Calu3 (cell line): ENCODE measurements at regions of chr7 and their contacts with region 1.

Region 1: GRCh38 chr7:876167-876967 is at the start of gene GET4:
- DNase-seq: peak; percentile 100
- H3K4me3 Mint-ChIP-seq: peak within 1 kb of the TSS; percentile 94
- H3K27ac Mint-ChIP-seq: peak within 1 kb of the TSS; percentile 98
- H3K4me1 Mint-ChIP-seq: peaks cover 19% of the 10 kb centered on the region
- H3K27me3 Mint-ChIP-seq: no peaks in the 10 kb centered on the region
- CTCF ChIP-seq: no peak
- total RNA-seq, gene GET4: 145 and 167 TPM in 2 replicates

Region 2: DNA sequence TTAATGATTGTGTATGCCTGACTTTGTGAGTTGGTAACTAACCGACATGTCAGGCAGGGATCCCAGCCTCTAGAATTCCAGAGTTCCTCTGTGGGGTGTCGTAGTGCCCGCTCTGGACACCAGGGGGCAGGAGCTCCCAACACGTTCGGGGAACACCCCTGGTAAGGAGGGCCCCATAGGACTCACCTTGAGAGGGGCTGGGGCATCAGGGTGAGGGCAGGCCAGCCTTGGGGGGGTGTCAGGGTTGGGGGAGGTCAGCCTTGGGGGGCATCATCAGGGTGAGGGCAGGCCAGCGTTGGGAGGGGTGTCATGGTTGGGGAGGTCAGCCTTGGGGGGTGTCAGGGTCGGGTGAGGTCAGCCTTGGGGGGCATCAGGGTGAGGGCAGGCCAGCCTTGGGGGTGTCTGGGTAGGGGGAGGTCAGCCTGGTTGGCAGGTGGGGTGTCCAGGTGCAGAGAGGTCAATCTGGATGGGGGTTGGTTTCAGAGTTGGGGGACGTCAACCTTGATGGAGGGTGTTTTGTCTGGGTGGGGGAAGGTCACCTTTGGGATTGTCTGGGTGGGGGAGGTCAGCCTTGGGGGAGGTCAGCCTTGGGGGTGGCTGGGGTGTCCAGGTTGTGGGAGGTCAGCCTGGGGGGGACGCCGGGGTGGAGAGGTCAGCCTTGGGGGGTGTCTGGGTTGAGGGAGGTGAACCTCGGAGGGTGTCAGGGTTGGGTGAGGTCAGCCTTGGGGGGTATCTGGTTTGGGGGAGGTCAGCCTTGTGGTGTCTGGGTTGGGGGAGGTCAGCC is 89.7 kb before region 1 on chr7:
- CTCF ChIA-PET with region 1: interaction called, 8 read pairs
- intact Hi-C with region 1: loop called (anchors 1 kb)
- DNase-seq: peak; percentile 89
- H3K4me3 Mint-ChIP-seq: no peak overlapping the region
- H3K27ac Mint-ChIP-seq: no peak overlapping the region
- H3K4me1 Mint-ChIP-seq: no peaks in the 10 kb centered on the region
- H3K27me3 Mint-ChIP-seq: no peaks in the 10 kb centered on the region
- CTCF ChIP-seq: peak; percentile 94

Region 3: GRCh38 chr7:831596-832166 is 44.7 kb before region 1 on chr7:
- CTCF ChIA-PET with region 1: interaction called, 11 read pairs
- intact Hi-C with region 1: loop called (anchors 5 kb)
- DNase-seq: peak; percentile 58
- H3K4me3 Mint-ChIP-seq: peak overlapping the region; percentile 58
- H3K27ac Mint-ChIP-seq: peak overlapping the region; percentile 91
- H3K4me1 Mint-ChIP-seq: peaks cover 56% of the 10 kb centered on the region
- H3K27me3 Mint-ChIP-seq: no peaks in the 10 kb centered on the region
- CTCF ChIP-seq: no peak

Region 4: GRCh38 chr7:836411-837400 is 39.7 kb before region 1 on chr7:
- CTCF ChIA-PET with region 1: interaction called, 11 read pairs
- intact Hi-C with region 1: loop called (anchors 5 kb)
- DNase-seq: peak; percentile 60
- H3K4me3 Mint-ChIP-seq: no peak overlapping the region
- H3K27ac Mint-ChIP-seq: peak overlapping the region; percentile 15
- H3K4me1 Mint-ChIP-seq: peaks cover 42% of the 10 kb centered on the region
- H3K27me3 Mint-ChIP-seq: no peaks in the 10 kb centered on the region
- CTCF ChIP-seq: peak; percentile 32